CD8-positive, alpha-beta T cell (primary cell): ENCODE measurements at regions of chr4 and their contacts with region 1.

Region 1: GRCh38 chr4:48898733-48899431 is 7.7 kb downstream of the OCIAD2 start:
- DNase-seq: no peak
- ATAC-seq: no peak
- H3K4me3 ChIP-seq: no peak overlapping the region
- H3K4me3 Mint-ChIP-seq: peak overlapping the region; percentile 13
- H3K27ac ChIP-seq: no peak overlapping the region
- H3K27ac Mint-ChIP-seq: peak overlapping the region; percentile 52
- H3K4me1 ChIP-seq: peaks cover 14% of the 10 kb centered on the region
- H3K4me1 Mint-ChIP-seq: peaks cover 53% of the 10 kb centered on the region
- H3K27me3 ChIP-seq: no peaks in the 10 kb centered on the region
- H3K27me3 Mint-ChIP-seq: no peaks in the 10 kb centered on the region
- CTCF ChIP-seq: no peak

Region 2: GRCh38 chr4:48623182-48623780 is 275.6 kb before region 1 on chr4:
- CTCF ChIA-PET with region 1: no interaction called
- POLR2A ChIA-PET with region 1: no interaction called
- intact Hi-C with region 1: no loop called
- DNase-seq: no peak
- ATAC-seq: no peak
- H3K4me3 ChIP-seq: no peak overlapping the region
- H3K4me3 Mint-ChIP-seq: no peak overlapping the region
- H3K27ac ChIP-seq: no peak overlapping the region
- H3K27ac Mint-ChIP-seq: no peak overlapping the region
- H3K4me1 ChIP-seq: no peaks in the 10 kb centered on the region
- H3K4me1 Mint-ChIP-seq: peaks cover 10% of the 10 kb centered on the region
- H3K27me3 ChIP-seq: no peaks in the 10 kb centered on the region
- H3K27me3 Mint-ChIP-seq: no peaks in the 10 kb centered on the region
- CTCF ChIP-seq: no peak

Region 3: DNA sequence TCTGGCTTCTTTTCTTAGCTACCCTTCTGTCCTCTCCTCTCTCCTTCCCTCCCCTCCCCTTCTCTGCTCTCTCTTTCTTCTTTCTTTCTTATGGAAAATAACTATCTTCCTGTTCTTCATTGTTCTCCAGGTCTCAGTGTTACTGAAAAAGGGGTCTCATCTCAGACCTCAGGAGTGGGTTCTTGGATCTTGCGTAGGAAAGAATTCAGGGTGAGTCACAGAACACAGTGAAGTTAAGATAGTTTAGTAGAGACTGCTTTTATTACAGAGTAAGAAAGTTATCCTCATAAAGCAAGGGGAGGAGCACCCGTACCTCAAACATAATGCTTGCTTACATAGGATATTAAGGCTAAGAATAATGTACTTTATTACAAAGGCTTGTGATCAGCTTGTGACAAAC is 55.4 kb after region 1 on chr4:
- CTCF ChIA-PET with region 1: interaction called, 3 read pairs
- POLR2A ChIA-PET with region 1: no interaction called
- intact Hi-C with region 1: loop called in 1 of 2 experiments (anchors 2 kb)
- DNase-seq: no peak
- ATAC-seq: no peak
- H3K4me3 ChIP-seq: no peak overlapping the region
- H3K4me3 Mint-ChIP-seq: no peak overlapping the region
- H3K27ac ChIP-seq: no peak overlapping the region
- H3K27ac Mint-ChIP-seq: no peak overlapping the region
- H3K4me1 ChIP-seq: no peaks in the 10 kb centered on the region
- H3K4me1 Mint-ChIP-seq: peaks cover 6% of the 10 kb centered on the region
- H3K27me3 ChIP-seq: no peaks in the 10 kb centered on the region
- H3K27me3 Mint-ChIP-seq: peaks cover 4% of the 10 kb centered on the region
- CTCF ChIP-seq: no peak

Region 4: DNA sequence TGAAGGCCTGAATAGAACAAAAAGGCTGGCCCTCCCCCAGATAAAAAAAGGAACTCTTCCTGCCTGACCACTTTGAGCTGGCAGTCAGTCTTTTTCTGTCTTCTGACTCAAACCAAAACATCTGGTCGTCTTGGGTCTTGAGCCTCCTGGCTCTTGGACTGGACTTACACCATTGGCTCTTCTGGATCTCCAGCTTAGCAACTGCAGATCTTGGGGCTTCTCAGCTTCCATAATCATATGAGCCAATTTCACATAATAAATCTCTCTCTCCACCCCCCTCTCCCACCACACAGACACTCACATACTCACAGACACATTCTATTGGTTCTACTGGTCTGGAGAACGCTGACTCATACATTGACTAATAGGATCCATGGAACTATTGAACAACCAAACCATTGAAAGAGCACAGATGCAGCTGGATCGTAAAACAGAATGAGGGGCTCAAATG is 71.6 kb after region 1 on chr4:
- CTCF ChIA-PET with region 1: no interaction called
- POLR2A ChIA-PET with region 1: no interaction called
- intact Hi-C with region 1: no loop called
- DNase-seq: no peak
- ATAC-seq: no peak
- H3K4me3 ChIP-seq: no peak overlapping the region
- H3K4me3 Mint-ChIP-seq: no peak overlapping the region
- H3K27ac ChIP-seq: no peak overlapping the region
- H3K27ac Mint-ChIP-seq: no peak overlapping the region
- H3K4me1 ChIP-seq: no peaks in the 10 kb centered on the region
- H3K4me1 Mint-ChIP-seq: no peaks in the 10 kb centered on the region
- H3K27me3 ChIP-seq: no peaks in the 10 kb centered on the region
- H3K27me3 Mint-ChIP-seq: peaks cover 4% of the 10 kb centered on the region
- CTCF ChIP-seq: no peak